Dorsolateral prefrontal cortex (tissue), 120 donors: ENCODE measurements at regions of chr12 and their contacts with region 1.

Region 1: GRCh38 chr12:49707128-49707811 is at the start of gene FMNL3:
- DNase-seq: peak; percentile 96 to 99 (median 98)
- H3K4me3 ChIP-seq: peak within 1 kb of the TSS; percentile 56 to 92 (median 84)
- H3K27ac ChIP-seq: peak within 1 kb of the TSS; percentile 44 to 98 (median 92)
- H3K27me3 ChIP-seq: no peaks in the 10 kb centered on the region
- CTCF ChIP-seq: peak; percentile 90 to 99 (median 98)
- total RNA-seq, gene FMNL3: 13.7 to 48.0 (median 29.3) TPM

Region 2: DNA sequence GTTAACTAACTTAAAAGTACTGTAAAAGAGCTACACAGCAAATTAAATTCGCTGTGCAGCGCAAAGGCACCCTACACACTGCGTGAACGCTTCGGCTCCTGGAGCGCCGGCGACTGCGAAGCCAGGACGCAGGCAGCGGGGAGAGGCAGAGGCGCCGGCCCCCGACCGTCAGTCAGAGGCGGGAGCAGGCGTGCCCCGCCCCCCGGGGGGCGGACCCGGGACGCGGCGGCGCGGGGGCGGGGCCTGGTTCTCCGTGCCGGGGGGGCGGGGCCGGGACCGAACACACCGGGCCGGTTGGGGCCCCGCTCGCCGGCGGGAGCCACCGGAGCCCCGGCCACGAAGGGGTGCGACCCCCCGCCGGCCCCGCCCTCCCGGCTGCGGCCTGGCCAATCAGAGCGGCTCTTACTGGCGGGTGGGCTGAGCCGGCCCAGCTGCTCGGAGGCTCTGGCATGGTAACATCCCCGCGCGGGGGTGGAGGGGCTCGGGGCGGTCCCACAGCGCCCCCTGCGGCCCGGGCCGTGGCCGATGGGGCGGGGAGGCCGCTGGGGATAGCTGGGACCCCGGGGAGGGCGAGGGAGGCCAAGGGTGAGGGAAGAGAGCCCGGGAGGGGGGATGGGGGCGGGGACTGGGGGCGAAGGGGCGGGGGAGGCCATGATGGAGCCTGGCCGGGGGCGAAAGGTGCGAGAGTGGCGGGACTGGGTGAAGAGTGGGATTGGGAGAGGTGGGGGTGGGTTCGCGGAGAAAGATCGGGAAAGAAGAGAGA is 83.9 kb before region 1 on chr12 and contains the start of gene PRPF40B:
- intact Hi-C with region 1: no loop called
- DNase-seq: peak; percentile 77 to 92 (median 84)
- H3K4me3 ChIP-seq: peak within 1 kb of the TSS; percentile 51 to 89 (median 75)
- H3K27ac ChIP-seq: peak within 1 kb of the TSS; percentile 48 to 92 (median 85)
- H3K27me3 ChIP-seq: no peaks in the 10 kb centered on the region
- CTCF ChIP-seq: peak in 35 of 56 donors; percentile 6 to 59 (median 33)
- total RNA-seq, gene PRPF40B: 31.6 to 78.4 (median 47.7) TPM

Region 3: GRCh38 chr12:49644620-49644994 is 62.7 kb before region 1 on chr12:
- intact Hi-C with region 1: loop called (anchors 1 kb)
- DNase-seq: peak; percentile 78 to 92 (median 86)
- H3K4me3 ChIP-seq: no peak overlapping the region
- H3K27ac ChIP-seq: peak overlapping the region in 53 of 59 donors; percentile 2 to 84 (median 59)
- H3K27me3 ChIP-seq: no peaks in the 10 kb centered on the region
- CTCF ChIP-seq: peak; percentile 80 to 99 (median 96)

Region 4: DNA sequence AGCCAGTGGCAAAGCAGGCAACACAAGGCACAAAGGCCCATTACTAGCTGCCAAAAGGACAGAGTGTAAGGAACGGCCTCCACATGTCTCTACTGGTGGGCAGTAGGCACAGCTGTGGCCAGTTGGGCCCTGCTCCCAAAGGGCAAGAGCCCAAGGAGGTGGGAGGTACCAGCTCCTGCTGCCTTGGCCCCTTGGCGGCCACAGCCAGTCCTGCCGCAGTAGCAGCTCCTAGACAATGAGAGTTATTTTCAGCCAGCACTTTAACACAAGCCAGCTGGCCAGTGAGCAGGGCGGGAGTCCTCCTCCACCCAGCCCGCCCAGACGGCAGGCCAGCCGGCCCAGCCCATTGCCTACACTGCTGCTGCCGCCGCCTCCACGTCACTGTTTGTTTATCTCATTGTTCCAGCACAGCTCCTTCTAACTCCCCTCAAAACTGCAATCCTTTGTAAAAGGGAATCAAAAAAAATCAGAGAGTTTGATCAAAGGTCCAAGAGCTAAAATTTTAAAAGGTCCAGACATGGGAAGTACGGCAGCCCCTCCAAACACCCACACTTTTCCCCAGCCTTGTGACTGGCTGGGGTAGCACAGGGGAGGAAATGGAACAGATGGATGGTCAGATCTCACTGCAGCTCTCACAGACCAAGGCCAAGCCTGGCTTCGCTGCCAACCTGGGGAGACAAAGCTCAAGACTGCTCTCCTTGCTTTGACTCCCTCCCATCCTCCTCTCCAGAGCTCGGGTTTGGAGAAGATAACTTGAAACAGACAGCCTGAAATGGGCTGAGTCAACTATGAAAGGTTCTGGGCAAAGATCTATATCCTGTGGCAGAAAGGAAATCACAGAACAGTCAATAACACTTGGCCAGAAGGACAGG is 33.6 kb before region 1 on chr12:
- intact Hi-C with region 1: loop called (anchors 1 kb)
- DNase-seq: peak; percentile 89 to 98 (median 95)
- H3K4me3 ChIP-seq: peak overlapping the region in 48 of 59 donors; percentile 1 to 48 (median 26)
- H3K27ac ChIP-seq: peak overlapping the region; percentile 30 to 99 (median 97)
- H3K27me3 ChIP-seq: no peaks in the 10 kb centered on the region
- CTCF ChIP-seq: peak in 41 of 56 donors; percentile 7 to 64 (median 44)

Region 5: GRCh38 chr12:49740930-49741881 is 33.9 kb after region 1 on chr12 and contains the start of gene TMBIM6:
- intact Hi-C with region 1: loop called in 1 of 2 experiments (anchors 2 kb)
- DNase-seq: peak; percentile 99 to 100 (median 100)
- H3K4me3 ChIP-seq: peak within 1 kb of the TSS; percentile 59 to 99 (median 92)
- H3K27ac ChIP-seq: peak within 1 kb of the TSS; percentile 75 to 99 (median 95)
- H3K27me3 ChIP-seq: no peaks in the 10 kb centered on the region
- CTCF ChIP-seq: peak; percentile 87 to 99 (median 96)
- total RNA-seq, gene TMBIM6: 290 to 477 (median 355) TPM

Region 6: GRCh38 chr12:49838973-49839633 is 131.8 kb after region 1 on chr12:
- intact Hi-C with region 1: no loop called
- DNase-seq: no peak
- H3K4me3 ChIP-seq: no peak overlapping the region
- H3K27ac ChIP-seq: peak overlapping the region in 2 of 59 donors; percentile 3 to 45
- H3K27me3 ChIP-seq: no peaks in the 10 kb centered on the region
- CTCF ChIP-seq: peak; percentile 23 to 83 (median 70)

Region 7: DNA sequence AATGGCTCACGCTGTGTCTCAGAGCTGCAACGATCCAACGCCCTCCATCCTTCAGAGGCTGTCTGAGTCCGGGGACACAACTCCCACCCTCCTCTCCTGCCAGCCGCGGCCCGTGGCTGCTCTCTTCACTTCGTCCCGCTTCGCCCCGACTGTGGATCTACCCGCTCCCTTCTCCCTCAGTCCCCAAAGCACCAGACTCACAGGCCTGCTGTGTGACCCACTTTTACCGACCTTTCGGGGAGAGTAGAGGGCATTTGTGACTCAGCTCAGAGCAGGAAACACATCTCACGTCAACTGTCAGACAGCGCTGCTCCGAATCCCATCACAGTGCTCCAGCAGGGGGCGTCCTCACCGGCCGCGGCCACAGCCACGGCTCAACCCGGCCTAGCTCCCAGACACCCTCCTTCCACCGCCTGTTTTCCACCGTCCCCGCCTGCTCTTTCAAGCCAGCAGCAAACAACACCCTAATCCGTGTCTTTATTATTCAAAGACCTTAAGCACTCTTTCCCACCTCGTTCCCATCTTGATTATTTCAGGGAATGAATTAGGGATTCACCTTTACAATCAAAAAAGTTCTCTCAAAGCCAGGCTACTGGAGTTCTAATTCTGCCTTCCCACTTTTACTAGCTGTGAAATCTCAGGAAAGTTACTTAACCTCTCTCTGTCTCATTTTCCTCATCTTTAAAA is 238.3 kb after region 1 on chr12:
- intact Hi-C with region 1: no loop called
- DNase-seq: peak in 9 of 10 donors; percentile 63 to 87 (median 78)
- H3K4me3 ChIP-seq: peak overlapping the region in 52 of 59 donors; percentile 5 to 61 (median 41)
- H3K27ac ChIP-seq: peak overlapping the region in 18 of 59 donors; percentile 1 to 66 (median 42)
- H3K27me3 ChIP-seq: no peaks in the 10 kb centered on the region
- CTCF ChIP-seq: peak; percentile 58 to 96 (median 86)